ENCODE measurements at regions of chr7 and their contacts with region 1.

Region 1: DNA sequence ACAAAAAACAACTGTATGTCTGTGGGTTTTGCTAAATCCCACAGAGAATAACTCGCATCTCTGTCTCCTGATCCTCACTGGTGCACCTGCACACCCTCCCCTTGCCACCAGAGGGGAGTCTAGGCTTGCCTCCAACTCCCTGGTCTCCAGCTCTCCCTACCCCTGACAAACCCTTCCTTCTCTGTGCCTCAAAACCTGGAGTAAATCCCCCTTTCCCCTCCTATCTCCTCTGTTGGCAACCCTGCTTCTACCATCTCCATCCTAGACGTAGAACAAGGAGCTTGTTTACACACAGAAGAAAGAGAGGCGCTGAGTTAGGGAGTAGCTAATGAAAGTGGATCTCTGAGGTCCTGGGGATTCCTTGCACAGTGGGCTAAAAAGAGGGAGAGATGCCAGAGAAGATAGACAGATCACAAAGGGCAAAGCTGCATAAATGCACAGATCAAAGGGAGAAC is 6.0 kb downstream of the MBLAC1 start:
- DNase-seq: peak; percentile 52
- H3K4me3 Mint-ChIP-seq: no peak overlapping the region
- H3K27ac Mint-ChIP-seq: no peak overlapping the region
- H3K4me1 Mint-ChIP-seq: peaks cover 16% of the 10 kb centered on the region
- H3K27me3 Mint-ChIP-seq: no peaks in the 10 kb centered on the region

Region 2: GRCh38 chr7:99910976-99911375 is 221.7 kb before region 1 on chr7:
- intact Hi-C with region 1: loop called (anchors 1 kb)
- DNase-seq: no peak
- H3K4me3 Mint-ChIP-seq: no peak overlapping the region
- H3K27ac Mint-ChIP-seq: no peak overlapping the region
- H3K4me1 Mint-ChIP-seq: peaks cover 25% of the 10 kb centered on the region
- H3K27me3 Mint-ChIP-seq: no peaks in the 10 kb centered on the region

Region 3: GRCh38 chr7:99997545-99998137 is 135.1 kb before region 1 on chr7:
- intact Hi-C with region 1: loop called (anchors 1 kb)
- DNase-seq: peak; percentile 69
- H3K4me3 Mint-ChIP-seq: peak overlapping the region; percentile 77
- H3K27ac Mint-ChIP-seq: peak overlapping the region; percentile 89
- H3K4me1 Mint-ChIP-seq: peaks cover 10% of the 10 kb centered on the region
- H3K27me3 Mint-ChIP-seq: peaks cover 5% of the 10 kb centered on the region

Region 4: GRCh38 chr7:100271716-100272537 is 139.2 kb after region 1 on chr7:
- intact Hi-C with region 1: loop called (anchors 5 kb)
- DNase-seq: peak; percentile 98
- H3K4me3 Mint-ChIP-seq: peak overlapping the region; percentile 77
- H3K27ac Mint-ChIP-seq: peak overlapping the region; percentile 55
- H3K4me1 Mint-ChIP-seq: peaks cover 14% of the 10 kb centered on the region
- H3K27me3 Mint-ChIP-seq: peaks cover 2% of the 10 kb centered on the region

Region 5: GRCh38 chr7:100407285-100408180 is 274.8 kb after region 1 on chr7:
- intact Hi-C with region 1: loop called (anchors 1 kb)
- DNase-seq: peak; percentile 45
- H3K4me3 Mint-ChIP-seq: no peak overlapping the region
- H3K27ac Mint-ChIP-seq: no peak overlapping the region
- H3K4me1 Mint-ChIP-seq: no peaks in the 10 kb centered on the region
- H3K27me3 Mint-ChIP-seq: peaks cover 24% of the 10 kb centered on the region

Measured in activated T-helper 1 cell treated with anti-CD3 and anti-CD28 coated beads, Interleukin-12 subunit alpha, Interleukin-12 subunit beta, Interleukin-2, Interleukin-4 antibody, amounts not matched to agents 30 ng/mL and 10 ng/mL and 1 ng/mL, durations not matched to agents 14 hours and 24 hours and 36 hours (primary cell).